ENCODE measurements at regions of chr22 and their contacts with region 1.

Region 1: GRCh38 chr22:40177738-40178416 is at the start of gene TNRC6B:
- DNase-seq: peak; percentile 82
- ATAC-seq: peak; percentile 77
- H3K4me3 Mint-ChIP-seq: peak within 1 kb of the TSS; percentile 89
- H3K27ac Mint-ChIP-seq: peak within 1 kb of the TSS; percentile 92
- H3K4me1 Mint-ChIP-seq: peaks cover 57% of the 10 kb centered on the region
- H3K27me3 Mint-ChIP-seq: no peaks in the 10 kb centered on the region
- total RNA-seq, gene TNRC6B: 37.3 to 40.3 TPM

Region 2: DNA sequence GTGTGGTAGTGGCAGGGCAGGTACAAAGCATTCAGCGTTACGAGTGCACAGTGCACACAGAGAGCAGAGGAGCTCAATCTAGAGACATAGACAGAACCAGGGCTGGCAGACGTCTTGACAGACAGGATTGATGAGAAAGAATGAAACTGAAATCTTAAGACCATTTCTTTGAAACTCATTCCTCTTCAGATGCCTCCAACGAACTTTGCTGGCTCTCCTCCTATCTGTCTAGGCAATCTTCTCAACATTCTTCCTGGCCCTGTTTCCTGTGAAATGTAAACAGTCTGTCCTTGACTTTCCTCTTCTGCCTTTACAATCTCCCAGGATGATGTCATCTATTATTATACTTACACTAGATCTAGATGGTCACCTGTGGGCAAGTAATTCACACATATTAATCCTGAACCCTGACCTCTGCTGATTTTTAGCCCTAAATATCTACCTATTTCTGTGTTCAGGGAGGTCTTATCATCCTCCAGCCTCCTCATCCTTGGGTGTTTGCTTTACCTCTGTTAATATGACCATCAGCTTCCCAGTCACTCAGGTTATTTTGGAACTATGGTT is 403.8 kb before region 1 on chr22:
- CTCF ChIA-PET with region 1: no interaction called
- POLR2A ChIA-PET with region 1: no interaction called
- intact Hi-C with region 1: no loop called
- DNase-seq: peak; percentile 57
- ATAC-seq: peak; percentile 98
- H3K4me3 Mint-ChIP-seq: peak overlapping the region; percentile 6
- H3K27ac Mint-ChIP-seq: peak overlapping the region; percentile 58
- H3K4me1 Mint-ChIP-seq: peaks cover 34% of the 10 kb centered on the region
- H3K27me3 Mint-ChIP-seq: no peaks in the 10 kb centered on the region

Region 3: DNA sequence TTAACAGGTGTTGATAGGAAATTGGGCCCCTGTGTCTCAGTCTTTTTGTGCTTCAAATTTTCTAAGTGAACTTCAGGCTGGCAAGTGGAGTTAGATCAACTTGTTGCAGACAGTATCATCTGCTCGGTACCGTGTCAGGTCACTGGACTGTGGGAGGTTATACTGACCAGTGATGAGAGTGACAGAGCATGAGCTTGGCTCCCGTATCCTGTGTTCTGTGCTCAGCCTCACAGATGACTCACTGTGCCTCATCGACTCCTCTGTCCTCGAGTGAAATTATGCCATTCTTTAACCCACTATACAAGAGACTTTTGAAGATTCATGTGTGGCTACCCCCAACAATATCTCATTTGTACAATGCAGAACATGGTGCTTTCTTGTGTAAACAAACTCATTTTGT is 269.1 kb before region 1 on chr22:
- CTCF ChIA-PET with region 1: no interaction called
- POLR2A ChIA-PET with region 1: no interaction called
- intact Hi-C with region 1: loop called in 1 of 2 experiments (anchors 2 kb)
- DNase-seq: peak; percentile 71
- ATAC-seq: peak; percentile 50
- H3K4me3 Mint-ChIP-seq: peak overlapping the region; percentile 86
- H3K27ac Mint-ChIP-seq: peak overlapping the region; percentile 100
- H3K4me1 Mint-ChIP-seq: peaks cover 75% of the 10 kb centered on the region
- H3K27me3 Mint-ChIP-seq: no peaks in the 10 kb centered on the region

Region 4: GRCh38 chr22:40055143-40055883 is 122.6 kb before region 1 on chr22:
- CTCF ChIA-PET with region 1: interaction called, 5 read pairs
- POLR2A ChIA-PET with region 1: interaction called, 11 read pairs
- intact Hi-C with region 1: loop called (anchors 2 kb)
- DNase-seq: peak; percentile 43
- ATAC-seq: peak; percentile 89
- H3K4me3 Mint-ChIP-seq: peak overlapping the region; percentile 73
- H3K27ac Mint-ChIP-seq: peak overlapping the region; percentile 100
- H3K4me1 Mint-ChIP-seq: peaks cover 79% of the 10 kb centered on the region
- H3K27me3 Mint-ChIP-seq: no peaks in the 10 kb centered on the region

Region 5: DNA sequence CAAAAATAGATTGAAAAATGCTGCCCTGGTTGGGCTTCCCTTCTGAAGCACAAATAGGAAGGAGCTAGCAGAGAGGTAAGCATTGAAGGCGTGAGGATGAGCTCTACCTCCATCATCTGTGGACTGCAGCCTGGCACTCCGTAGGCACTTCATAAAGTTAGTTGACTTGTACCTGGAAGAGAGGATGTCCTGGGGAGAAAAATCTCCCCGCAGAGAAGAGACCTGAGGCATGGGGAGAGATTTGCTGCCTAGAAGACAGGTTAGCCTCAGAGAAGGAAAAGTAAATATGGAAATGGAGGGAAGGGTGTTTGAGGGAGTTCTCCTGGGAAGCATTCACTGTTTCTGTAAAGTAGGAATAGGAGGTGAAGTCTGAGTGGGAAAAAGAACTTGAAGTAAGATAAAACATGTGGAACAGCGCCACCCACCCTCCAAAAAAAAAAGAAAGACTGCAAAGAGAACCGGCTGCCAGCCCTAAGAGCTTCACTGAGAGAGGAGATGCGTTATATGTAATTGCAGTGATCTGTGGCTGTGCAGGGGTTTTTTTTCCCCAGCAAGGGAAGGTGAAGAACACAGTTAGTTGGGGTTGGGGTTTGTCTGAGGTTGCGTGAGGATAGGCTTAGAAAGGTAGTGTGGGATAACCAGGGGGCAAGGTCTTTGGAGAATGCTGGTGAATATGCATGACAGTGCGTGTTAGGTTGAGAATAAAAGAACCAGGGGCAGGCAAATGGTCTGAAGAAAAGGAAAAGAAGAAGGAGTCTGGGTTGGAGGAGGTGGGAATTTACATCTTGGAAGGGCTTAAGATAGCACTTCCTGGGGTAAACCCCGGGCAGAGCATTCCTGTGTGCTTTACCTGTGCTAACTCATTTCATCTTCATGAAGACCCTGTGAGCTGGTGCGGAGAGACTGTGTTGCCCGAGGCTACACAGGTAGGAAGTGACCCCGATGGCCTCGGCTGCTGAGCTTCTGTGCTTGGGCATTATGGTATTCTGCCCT is 15.8 kb after region 1 on chr22:
- CTCF ChIA-PET with region 1: interaction called, 6 read pairs
- POLR2A ChIA-PET with region 1: interaction called, 14 read pairs
- intact Hi-C with region 1: loop called (anchors 1 kb)
- DNase-seq: no peak
- ATAC-seq: no peak
- H3K4me3 Mint-ChIP-seq: no peak overlapping the region
- H3K27ac Mint-ChIP-seq: peak overlapping the region; percentile 72
- H3K4me1 Mint-ChIP-seq: peaks cover 86% of the 10 kb centered on the region
- H3K27me3 Mint-ChIP-seq: no peaks in the 10 kb centered on the region

Region 6: GRCh38 chr22:40243891-40244290 is 66.0 kb after region 1 on chr22:
- CTCF ChIA-PET with region 1: interaction called, 3 read pairs
- POLR2A ChIA-PET with region 1: interaction called, 10 read pairs
- intact Hi-C with region 1: loop called (anchors 1 kb)
- DNase-seq: no peak
- ATAC-seq: no peak
- H3K4me3 Mint-ChIP-seq: no peak overlapping the region
- H3K27ac Mint-ChIP-seq: peak overlapping the region; percentile 59
- H3K4me1 Mint-ChIP-seq: peaks cover 78% of the 10 kb centered on the region
- H3K27me3 Mint-ChIP-seq: no peaks in the 10 kb centered on the region

Region 7: DNA sequence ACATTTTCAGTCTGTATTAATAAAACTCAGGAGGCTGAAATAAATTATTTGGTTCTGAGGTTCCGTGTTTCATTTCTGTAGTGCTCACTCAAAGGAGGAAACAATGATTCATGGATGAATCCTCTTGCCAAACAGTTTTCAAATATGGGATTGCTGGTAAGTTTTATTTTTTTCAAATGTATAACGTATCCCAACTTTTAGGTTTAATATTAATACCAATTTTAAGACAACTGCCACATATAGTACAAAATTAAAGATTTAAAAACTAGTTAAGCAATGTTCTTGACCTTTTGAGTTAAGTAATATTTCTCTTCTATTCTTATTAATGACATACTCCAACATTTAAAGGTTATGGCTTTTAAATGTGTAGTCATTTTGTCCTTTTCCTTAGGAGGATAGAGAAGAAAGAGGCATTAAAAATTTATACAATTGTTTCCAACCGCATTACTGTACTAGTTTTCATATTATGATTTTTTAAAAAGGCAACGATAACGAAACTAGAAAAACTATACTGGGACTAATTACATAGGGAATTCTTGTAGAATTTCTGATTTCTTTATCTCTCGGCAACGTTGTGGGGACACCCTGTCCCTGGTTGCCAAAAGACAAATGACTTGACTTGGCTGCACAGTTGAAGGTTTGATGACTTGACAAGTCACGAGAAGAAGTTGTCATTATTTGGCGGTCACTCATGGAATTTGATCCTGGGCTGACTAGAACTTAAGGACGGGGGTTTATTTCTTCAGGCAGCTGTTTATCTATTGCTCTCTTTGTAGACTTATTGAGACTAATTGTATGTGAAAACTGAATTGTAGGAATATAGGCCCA is 99.3 kb after region 1 on chr22:
- CTCF ChIA-PET with region 1: interaction called, 3 read pairs
- POLR2A ChIA-PET with region 1: interaction called, 3 read pairs
- intact Hi-C with region 1: loop called in 1 of 2 experiments (anchors 1 kb)
- DNase-seq: no peak
- ATAC-seq: peak; percentile 31
- H3K4me3 Mint-ChIP-seq: no peak overlapping the region
- H3K27ac Mint-ChIP-seq: peak overlapping the region; percentile 68
- H3K4me1 Mint-ChIP-seq: peaks cover 47% of the 10 kb centered on the region
- H3K27me3 Mint-ChIP-seq: no peaks in the 10 kb centered on the region

Region 8: DNA sequence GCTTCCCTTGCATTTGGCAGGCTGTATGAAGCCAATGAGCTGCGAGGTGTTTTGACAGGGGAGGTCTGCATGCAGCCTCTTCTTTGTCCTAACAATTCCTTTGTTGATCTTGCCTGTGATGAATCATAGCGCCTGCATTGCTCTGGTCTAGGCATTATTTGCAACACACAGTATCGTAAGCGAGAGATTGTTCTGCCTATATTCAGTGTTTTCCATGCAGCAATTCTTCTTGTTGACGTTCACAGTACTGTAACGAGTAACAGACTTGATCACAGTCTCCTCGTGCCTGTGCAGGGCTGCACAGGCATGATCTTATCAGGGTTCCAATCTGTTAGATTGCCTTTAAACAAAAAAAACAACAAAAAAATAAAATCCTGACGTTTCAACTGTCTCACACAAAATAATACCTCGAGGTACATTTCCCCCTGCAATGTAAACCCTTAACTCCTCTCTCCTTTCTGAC is 154.5 kb after region 1 on chr22:
- CTCF ChIA-PET with region 1: interaction called, 3 read pairs
- POLR2A ChIA-PET with region 1: no interaction called
- intact Hi-C with region 1: loop called in 1 of 2 experiments (anchors 5 kb)
- DNase-seq: peak; percentile 37
- ATAC-seq: peak; percentile 55
- H3K4me3 Mint-ChIP-seq: peak overlapping the region; percentile 59
- H3K27ac Mint-ChIP-seq: peak overlapping the region; percentile 84
- H3K4me1 Mint-ChIP-seq: peaks cover 90% of the 10 kb centered on the region
- H3K27me3 Mint-ChIP-seq: no peaks in the 10 kb centered on the region

Region 9: GRCh38 chr22:40363059-40363458 is 185.2 kb after region 1 on chr22:
- CTCF ChIA-PET with region 1: no interaction called
- POLR2A ChIA-PET with region 1: no interaction called
- intact Hi-C with region 1: no loop called
- DNase-seq: no peak
- ATAC-seq: no peak
- H3K4me3 Mint-ChIP-seq: no peak overlapping the region
- H3K27ac Mint-ChIP-seq: no peak overlapping the region
- H3K4me1 Mint-ChIP-seq: no peaks in the 10 kb centered on the region
- H3K27me3 Mint-ChIP-seq: no peaks in the 10 kb centered on the region

Measured in activated CD4-positive, alpha-beta T cell treated with anti-CD3 and anti-CD28 coated beads for 36 hours (primary cell).